MCF 10A (cell line): ENCODE measurements at regions of chr10 and their contacts with region 1.

Region 1: GRCh38 chr10:7818295-7819122 is at the start of gene TAF3:
- DNase-seq: peak; percentile 92
- H3K4me3 Mint-ChIP-seq: peak within 1 kb of the TSS; percentile 94
- H3K27ac Mint-ChIP-seq: peak within 1 kb of the TSS; percentile 57
- H3K4me1 Mint-ChIP-seq: peaks cover 24% of the 10 kb centered on the region
- H3K27me3 Mint-ChIP-seq: no peaks in the 10 kb centered on the region
- CTCF ChIP-seq: no peak
- total RNA-seq, gene TAF3: 9.3 and 9.9 TPM in 2 replicates

Region 2: GRCh38 chr10:7756360-7756992 is 62.0 kb before region 1 on chr10:
- CTCF ChIA-PET with region 1: interaction called, 6 read pairs
- POLR2A ChIA-PET with region 1: interaction called, 4 read pairs
- intact Hi-C with region 1: loop called (anchors 1 kb)
- DNase-seq: peak; percentile 55
- H3K4me3 Mint-ChIP-seq: no peak overlapping the region
- H3K27ac Mint-ChIP-seq: no peak overlapping the region
- H3K4me1 Mint-ChIP-seq: no peaks in the 10 kb centered on the region
- H3K27me3 Mint-ChIP-seq: no peaks in the 10 kb centered on the region
- CTCF ChIP-seq: peak; percentile 45

Region 3: DNA sequence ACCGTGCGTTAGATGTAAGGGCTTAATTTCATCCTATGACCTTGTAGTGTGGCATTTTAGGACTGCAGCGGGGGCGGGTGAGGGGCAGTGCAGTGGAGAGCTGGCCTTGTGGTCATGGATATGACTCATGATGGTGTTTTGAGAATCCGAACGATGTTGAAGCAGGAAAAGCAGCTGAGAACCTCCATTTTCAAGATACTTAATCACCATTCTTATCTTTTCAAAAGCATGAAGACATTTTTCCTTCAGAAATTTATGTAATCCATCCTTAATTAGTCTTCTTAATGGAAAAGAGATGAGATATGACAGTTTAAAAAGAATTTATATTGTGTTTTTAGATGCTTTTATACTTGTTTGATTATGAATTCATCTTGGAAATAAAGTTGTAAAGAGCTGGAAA is 20.9 kb before region 1 on chr10:
- CTCF ChIA-PET with region 1: interaction called, 4 read pairs
- POLR2A ChIA-PET with region 1: interaction called, 20 read pairs
- intact Hi-C with region 1: no loop called
- DNase-seq: peak; percentile 71
- H3K4me3 Mint-ChIP-seq: no peak overlapping the region
- H3K27ac Mint-ChIP-seq: peak overlapping the region; percentile 50
- H3K4me1 Mint-ChIP-seq: peaks cover 27% of the 10 kb centered on the region
- H3K27me3 Mint-ChIP-seq: no peaks in the 10 kb centered on the region
- CTCF ChIP-seq: no peak

Region 4: DNA sequence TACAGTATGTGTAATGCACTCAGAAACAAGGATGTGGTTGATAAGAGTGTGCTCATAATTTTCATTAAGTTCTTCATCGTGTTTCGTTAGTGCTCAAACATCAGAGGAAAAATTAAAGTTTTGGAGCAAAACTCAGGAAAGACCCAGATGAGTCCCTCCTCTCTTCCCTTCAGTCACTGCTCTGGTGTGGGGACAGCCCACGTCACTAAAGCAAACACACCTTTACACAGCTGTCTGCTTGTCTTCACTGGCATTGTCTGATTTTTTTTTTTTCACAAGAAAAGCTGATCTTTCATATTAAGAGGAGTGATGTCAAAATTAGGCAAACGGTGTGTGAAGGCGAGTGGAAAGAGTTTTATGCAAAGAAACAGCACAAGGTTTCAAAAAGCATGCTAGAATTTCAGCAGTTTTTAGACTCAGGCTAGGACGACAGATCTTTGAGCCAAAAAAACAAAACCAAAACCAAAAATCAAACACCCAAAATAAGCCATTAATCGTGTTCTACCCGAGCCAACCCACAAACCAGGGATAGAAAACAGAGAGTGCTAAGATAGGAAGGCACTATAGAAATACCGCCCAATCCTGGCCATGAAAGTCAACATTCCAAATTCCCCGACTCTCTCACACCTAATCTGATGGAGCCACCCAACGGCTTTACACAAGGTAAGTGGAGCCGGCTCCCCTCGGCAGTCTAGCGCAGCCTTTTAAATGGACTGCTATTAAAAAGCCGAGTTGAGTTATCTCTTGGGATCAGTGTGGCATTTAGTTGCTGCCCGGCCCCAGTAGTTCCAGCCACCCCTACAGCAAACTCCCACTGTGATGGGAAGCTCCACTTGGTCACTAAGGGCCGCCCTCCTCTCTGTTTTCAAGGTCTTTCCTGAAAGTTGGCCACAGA is 208.1 kb after region 1 on chr10:
- CTCF ChIA-PET with region 1: no interaction called
- POLR2A ChIA-PET with region 1: no interaction called
- intact Hi-C with region 1: no loop called
- DNase-seq: no peak
- H3K4me3 Mint-ChIP-seq: no peak overlapping the region
- H3K27ac Mint-ChIP-seq: no peak overlapping the region
- H3K4me1 Mint-ChIP-seq: no peaks in the 10 kb centered on the region
- H3K27me3 Mint-ChIP-seq: no peaks in the 10 kb centered on the region
- CTCF ChIP-seq: no peak